Activated T-helper 1 cell treated with anti-CD3 and anti-CD28 coated beads, Interleukin-12 subunit alpha, Interleukin-12 subunit beta, Interleukin-2, Interleukin-4 antibody, amounts not matched to agents 30 ng/mL and 10 ng/mL and 1 ng/mL, durations not matched to agents 14 hours and 24 hours and 36 hours (primary cell): ENCODE measurements at regions of chr10 and their contacts with region 1.

Region 1: GRCh38 chr10:121734589-121735045 is 136.4 kb upstream of the FGFR2 start:
- DNase-seq: no peak
- H3K4me3 Mint-ChIP-seq: no peak overlapping the region
- H3K27ac Mint-ChIP-seq: no peak overlapping the region
- H3K4me1 Mint-ChIP-seq: no peaks in the 10 kb centered on the region
- H3K27me3 Mint-ChIP-seq: peaks cover 17% of the 10 kb centered on the region

Region 2: DNA sequence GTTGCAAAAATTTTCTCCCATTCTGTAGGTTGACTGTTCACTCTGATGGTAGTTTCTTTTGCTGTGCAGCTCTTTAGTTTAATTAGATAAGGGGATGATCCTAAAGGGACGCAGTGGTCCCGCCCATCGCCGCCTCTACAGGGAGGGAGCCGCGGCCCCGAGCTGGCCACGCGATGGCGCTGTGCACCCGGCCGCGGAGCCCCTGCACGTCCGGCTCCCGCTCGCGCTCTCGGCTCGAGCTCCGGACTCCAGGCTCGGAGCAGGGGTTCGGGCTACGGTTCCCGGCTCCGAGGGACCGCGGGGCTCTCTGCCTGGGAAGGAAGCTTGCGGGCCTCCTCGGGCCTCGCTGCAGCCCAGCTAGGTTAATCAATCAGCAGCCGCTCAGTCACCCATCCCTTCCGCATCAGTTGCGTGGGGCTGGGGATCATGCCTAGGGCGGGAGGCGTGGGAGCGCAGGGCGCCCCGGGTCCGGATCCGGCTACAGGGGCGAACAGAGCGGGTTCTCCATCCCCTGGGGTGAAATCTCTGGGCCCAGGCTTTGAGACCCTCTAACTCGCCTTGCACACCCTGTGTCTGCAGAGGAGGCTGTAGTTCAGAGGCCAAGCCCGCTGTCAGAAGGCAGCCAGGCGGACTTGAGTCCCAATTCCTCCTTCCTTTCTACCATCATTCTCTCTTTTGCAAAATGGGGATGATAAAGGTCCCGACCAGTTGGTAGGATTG is 785.6 kb before region 1 on chr10:
- intact Hi-C with region 1: loop called (anchors 1 kb)
- DNase-seq: peak; percentile 49
- H3K4me3 Mint-ChIP-seq: peak overlapping the region; percentile 33
- H3K27ac Mint-ChIP-seq: no peak overlapping the region
- H3K4me1 Mint-ChIP-seq: peaks cover 6% of the 10 kb centered on the region
- H3K27me3 Mint-ChIP-seq: peaks cover 32% of the 10 kb centered on the region

Region 3: DNA sequence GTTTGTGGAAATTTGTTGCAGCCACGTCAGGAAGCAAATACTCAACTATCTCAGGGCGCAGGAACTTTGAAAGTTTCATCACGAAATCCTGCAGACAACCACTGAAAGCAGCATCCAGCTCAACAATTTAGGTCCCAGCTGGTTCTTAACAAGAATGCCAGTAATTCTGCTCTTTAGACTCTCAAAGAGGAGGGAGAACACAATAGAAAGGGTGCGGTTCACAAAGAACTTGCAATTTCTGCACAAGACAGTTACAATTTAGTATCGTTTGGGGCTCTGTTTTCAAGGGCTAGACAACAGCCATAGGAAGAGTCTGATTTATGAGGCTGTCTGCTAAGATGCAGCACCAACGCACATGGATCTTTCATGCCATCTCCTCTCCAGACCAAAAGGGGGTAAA is 359.4 kb before region 1 on chr10:
- intact Hi-C with region 1: no loop called
- DNase-seq: no peak
- H3K4me3 Mint-ChIP-seq: no peak overlapping the region
- H3K27ac Mint-ChIP-seq: no peak overlapping the region
- H3K4me1 Mint-ChIP-seq: no peaks in the 10 kb centered on the region
- H3K27me3 Mint-ChIP-seq: no peaks in the 10 kb centered on the region

Region 4: DNA sequence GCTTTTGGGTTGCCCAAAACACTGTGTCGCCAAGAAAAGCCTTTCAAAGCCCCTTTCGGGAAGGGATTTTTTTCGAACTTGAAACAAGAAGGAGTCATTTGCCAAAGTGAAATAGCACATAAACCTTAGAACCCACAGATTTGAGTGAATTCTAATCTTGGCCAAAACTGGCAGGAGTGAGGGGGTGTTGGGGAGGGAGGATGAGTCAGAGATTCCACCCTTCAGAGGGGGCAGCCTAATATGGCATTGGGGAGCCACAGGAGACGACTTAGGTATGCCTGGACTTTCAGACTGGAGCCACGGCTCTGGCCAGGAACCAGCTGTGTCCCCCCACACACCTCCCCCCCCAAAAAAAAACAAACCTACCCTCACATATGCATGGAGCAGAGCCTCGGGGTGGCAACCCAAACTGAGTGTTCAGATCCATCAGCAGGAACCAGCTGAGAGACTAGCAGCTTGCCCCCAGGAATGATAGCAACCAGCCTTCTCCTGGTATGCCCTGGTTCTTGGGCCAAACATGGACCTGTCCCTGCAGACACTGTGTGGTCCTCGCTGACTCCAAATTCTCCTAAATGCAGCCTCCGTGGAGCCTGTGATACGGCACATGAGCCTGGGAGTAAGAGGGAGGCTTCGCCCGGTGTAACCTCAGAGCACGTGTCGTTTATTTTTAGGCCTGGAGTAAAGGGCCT is 274.7 kb before region 1 on chr10:
- intact Hi-C with region 1: no loop called
- DNase-seq: no peak
- H3K4me3 Mint-ChIP-seq: no peak overlapping the region
- H3K27ac Mint-ChIP-seq: no peak overlapping the region
- H3K4me1 Mint-ChIP-seq: no peaks in the 10 kb centered on the region
- H3K27me3 Mint-ChIP-seq: no peaks in the 10 kb centered on the region

Region 5: DNA sequence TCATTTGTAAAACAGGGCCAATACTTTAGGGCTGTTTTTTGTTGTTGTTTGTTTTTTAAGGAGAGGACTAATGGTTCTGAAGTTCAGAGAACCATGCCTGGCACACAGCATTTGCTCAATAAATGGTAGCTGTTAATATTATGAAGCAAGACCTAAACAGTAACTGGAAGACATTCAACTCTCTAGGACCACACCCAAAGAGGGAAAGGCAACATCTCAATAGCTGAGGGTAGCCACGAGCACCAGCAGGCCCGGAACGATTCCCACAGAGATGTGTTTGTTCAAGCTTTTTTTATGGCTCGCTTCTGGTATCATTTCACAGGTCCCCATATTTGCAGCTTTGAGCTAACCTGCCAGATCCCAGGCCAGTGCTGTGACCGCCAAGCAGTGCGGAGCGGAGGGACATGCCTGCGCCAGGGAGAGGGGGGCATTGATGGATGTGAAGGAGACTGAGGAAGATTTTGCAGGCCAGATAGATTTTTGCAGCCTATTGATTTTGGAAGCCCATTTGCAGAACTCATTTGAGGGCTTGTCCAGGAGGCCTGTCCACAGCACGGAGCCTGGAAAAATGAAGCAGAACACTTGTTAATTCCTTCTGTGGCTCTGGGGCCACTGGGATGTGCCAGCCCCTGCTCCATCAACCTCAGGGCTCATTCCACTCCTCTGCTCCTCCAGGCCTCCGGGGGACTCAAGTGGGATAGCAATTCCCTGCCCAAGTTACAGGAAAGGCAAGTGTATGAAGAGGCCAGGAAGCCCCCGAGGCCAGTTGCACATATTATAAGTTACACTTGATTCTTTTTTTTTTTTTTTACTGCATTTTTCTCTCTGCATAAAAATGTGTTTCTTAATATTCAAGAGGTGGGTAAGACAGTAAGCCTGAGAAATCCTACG is 79.1 kb before region 1 on chr10:
- intact Hi-C with region 1: no loop called
- DNase-seq: no peak
- H3K4me3 Mint-ChIP-seq: no peak overlapping the region
- H3K27ac Mint-ChIP-seq: no peak overlapping the region
- H3K4me1 Mint-ChIP-seq: no peaks in the 10 kb centered on the region
- H3K27me3 Mint-ChIP-seq: no peaks in the 10 kb centered on the region

Region 6: DNA sequence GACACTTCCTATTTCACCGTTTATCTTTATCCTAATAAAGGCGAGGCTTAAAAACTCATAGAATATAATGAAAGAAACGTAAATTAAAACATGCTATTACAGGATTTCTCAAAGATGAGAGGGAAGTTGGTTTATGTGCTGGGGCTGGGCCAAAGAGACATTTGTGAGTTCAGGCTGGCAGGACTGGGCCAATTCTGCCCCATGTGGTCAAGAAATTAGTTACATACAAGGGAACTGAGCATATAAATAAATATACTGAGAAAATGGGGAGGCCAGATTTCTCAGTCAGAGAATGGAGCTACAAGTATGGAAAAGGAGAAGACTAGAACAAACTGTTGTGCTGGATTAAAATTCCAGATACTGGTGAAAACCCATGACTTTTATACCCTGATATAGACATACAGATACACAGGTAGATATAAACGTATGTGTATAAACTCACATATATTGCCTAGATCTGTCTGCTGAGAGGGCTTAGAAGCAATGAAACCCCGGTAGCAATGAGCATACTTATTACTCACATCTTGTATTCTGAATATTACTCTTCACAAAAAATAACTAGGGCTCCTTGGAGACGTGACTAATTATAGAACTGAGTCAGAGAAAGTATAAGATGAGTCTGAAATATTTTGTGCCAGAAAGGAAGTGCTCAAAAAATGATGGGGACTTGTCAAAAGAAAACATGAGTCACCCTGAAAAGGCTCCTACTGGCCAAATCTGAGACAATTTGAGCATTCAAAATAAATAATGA is 19.3 kb after region 1 on chr10:
- intact Hi-C with region 1: loop called (anchors 1 kb)
- DNase-seq: no peak
- H3K4me3 Mint-ChIP-seq: no peak overlapping the region
- H3K27ac Mint-ChIP-seq: peak overlapping the region; percentile 40
- H3K4me1 Mint-ChIP-seq: peaks cover 17% of the 10 kb centered on the region
- H3K27me3 Mint-ChIP-seq: peaks cover 3% of the 10 kb centered on the region

Region 7: GRCh38 chr10:121886997-121887622 is 152.5 kb after region 1 on chr10:
- intact Hi-C with region 1: loop called (anchors 5 kb)
- DNase-seq: peak; percentile 3
- H3K4me3 Mint-ChIP-seq: no peak overlapping the region
- H3K27ac Mint-ChIP-seq: no peak overlapping the region
- H3K4me1 Mint-ChIP-seq: no peaks in the 10 kb centered on the region
- H3K27me3 Mint-ChIP-seq: no peaks in the 10 kb centered on the region

Region 8: DNA sequence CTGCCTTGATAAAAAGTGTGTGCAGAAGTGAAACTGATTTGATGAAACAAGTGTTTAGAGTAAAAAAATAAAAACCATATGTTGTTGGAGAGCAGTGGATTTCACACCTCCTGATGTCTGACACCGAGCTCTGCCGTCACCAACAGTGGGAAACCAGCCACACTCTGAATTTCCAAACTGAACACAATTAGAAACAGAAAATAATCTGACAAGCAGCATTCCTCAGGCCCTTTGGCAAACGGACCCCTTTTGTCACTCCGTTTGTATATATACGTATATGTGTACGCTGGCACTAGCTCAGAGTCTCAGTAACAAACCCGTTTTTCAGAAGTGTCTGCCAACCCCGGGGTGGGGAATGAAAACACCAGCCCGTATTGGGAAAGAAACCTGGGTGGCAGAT is 286.8 kb after region 1 on chr10:
- intact Hi-C with region 1: no loop called
- DNase-seq: no peak
- H3K4me3 Mint-ChIP-seq: no peak overlapping the region
- H3K27ac Mint-ChIP-seq: no peak overlapping the region
- H3K4me1 Mint-ChIP-seq: no peaks in the 10 kb centered on the region
- H3K27me3 Mint-ChIP-seq: peaks cover 4% of the 10 kb centered on the region